ENCODE measurements at regions of chr3 and their contacts with region 1.

Region 1: DNA sequence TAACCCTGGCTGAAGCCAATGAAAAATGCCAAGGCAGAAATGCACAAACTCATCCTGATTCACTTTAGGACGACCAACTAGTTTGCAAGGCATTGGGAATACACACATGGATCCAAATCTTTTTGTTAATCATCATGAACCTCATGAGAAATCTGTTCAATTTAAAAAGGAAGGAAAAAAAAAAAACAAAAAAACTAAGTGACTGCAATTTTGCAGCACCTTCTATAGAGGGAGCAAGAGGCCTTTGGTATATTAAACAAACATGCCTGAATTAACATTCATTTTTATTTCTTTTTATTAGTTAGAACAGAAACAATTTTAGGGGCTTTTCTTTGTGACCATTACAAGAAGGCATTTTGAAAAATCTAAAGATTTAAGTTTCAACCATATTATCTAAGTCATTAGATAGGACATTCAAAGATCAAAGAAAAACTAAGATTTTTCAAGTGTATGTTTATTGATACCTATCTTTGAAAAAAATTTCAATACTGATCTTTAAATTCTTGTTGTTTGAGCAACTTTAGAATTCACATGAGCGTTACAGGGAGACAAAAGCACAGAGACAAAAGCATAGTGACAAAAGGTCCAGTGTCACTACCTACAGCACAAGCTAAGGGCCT is 182.4 kb downstream of the CBLB start:
- DNase-seq: no peak
- H3K4me3 ChIP-seq: no peak overlapping the region
- H3K27ac ChIP-seq: no peak overlapping the region
- H3K4me1 ChIP-seq: no peaks in the 10 kb centered on the region
- H3K27me3 ChIP-seq: no peaks in the 10 kb centered on the region
- CTCF ChIP-seq: peak; percentile 55 to 82 (median 69)
- EP300 ChIP-seq: no peak
- POLR2A ChIP-seq: no peak

Region 2: DNA sequence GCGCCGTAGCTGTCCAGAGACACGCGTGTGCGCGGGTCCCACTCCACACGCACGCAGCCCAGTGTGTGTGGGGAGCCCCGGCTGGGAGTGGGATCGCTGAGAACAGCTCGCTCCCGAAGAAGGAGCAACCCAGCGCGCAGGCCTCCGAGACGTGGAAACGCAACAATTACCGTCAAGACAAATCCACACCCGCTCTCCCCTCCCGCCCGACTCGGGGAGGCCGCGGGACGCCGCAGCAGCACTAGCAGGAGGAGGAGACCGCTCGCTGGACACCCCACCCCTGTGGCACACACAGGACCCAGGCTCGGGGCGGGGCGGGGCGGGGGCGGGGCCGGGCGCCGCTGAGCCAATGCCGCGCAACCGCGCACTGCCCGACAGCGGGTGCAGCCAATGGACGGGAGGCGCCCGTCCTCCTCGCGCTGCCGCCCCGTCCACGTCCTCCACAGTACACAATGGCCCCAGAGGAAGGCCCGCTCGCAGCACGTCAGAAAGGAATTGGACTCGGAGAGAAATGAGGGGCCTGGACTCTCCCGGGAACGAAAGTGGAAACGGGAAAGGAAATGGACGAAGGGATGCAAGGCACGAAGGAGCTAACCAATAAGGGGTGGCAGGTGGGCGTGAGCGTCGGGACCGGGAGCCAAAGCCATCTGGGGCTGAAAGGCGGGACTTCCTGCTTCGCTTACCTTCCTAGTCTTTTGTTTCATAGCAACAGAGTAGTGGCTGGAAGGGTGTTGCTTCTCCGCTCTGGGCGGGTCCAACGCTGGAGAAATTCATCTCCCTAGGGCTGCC is 182.5 kb after region 1 on chr3 and contains the start of gene CBLB:
- in situ Hi-C with region 1: loop called in 1 of 4 experiments (anchors 25 kb)
- intact Hi-C with region 1: no loop called
- DNase-seq: peak; percentile 92
- H3K4me3 ChIP-seq: peak within 1 kb of the TSS; percentile 75 to 92 (median 88)
- H3K27ac ChIP-seq: peak within 1 kb of the TSS; percentile 95 to 98 (median 96)
- H3K4me1 ChIP-seq: peaks cover 0 to 50% (median 27%) of the 10 kb centered on the region in 4 donors
- H3K27me3 ChIP-seq: no peaks in the 10 kb centered on the region
- CTCF ChIP-seq: no peak
- EP300 ChIP-seq: no peak
- POLR2A ChIP-seq: peak; percentile 89
- total RNA-seq, gene CBLB: 25.1 to 76.2 (median 63.6) TPM

Region 3: DNA sequence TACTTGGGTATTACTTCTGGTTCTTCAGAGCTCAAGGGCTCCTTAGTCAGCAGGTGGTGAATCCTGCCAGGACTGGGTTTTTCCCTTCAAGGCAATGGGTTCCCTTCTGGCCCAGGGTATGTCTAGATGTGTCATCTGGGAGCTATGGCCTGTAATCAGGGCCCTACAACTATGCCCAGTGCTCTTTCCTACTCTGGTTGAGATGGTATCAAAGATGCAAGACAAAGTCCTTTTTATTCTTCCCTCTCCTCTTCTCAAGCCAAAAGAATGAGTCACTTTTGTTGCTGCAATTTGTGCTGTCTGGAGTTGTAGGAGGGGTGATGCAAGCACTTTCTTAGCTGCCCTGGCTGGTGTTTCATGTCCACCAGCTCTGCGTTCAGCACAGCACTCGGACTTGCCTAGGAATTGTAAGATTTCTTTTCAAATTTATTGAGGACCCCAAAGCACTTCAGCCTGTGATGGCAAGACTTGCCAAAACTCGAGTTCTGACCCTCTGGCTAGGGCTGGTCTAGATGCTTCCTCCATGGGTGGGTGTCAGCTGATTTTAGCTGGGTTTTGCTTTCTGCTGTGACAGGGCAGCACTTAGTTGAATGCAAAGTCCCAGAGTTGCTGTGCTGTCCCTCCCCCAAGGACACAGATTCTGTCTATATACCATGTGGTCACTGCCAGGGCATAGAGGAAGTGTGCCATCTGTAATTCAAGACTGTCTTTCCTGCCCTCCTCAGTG is 311.6 kb after region 1 on chr3:
- in situ Hi-C with region 1: no loop called
- intact Hi-C with region 1: no loop called
- DNase-seq: no peak
- H3K4me3 ChIP-seq: no peak overlapping the region
- H3K27ac ChIP-seq: no peak overlapping the region
- H3K4me1 ChIP-seq: no peaks in the 10 kb centered on the region
- H3K27me3 ChIP-seq: no peaks in the 10 kb centered on the region
- CTCF ChIP-seq: no peak
- EP300 ChIP-seq: no peak
- POLR2A ChIP-seq: no peak

Region 4: GRCh38 chr3:106609666-106610301 is 923.4 kb after region 1 on chr3:
- in situ Hi-C with region 1: loop called (anchors 25 kb)
- intact Hi-C with region 1: no loop called
- DNase-seq: peak; percentile 43
- H3K4me3 ChIP-seq: no peak overlapping the region
- H3K27ac ChIP-seq: no peak overlapping the region
- H3K4me1 ChIP-seq: no peaks in the 10 kb centered on the region
- H3K27me3 ChIP-seq: no peaks in the 10 kb centered on the region
- CTCF ChIP-seq: peak; percentile 69 to 82 (median 78)
- EP300 ChIP-seq: no peak
- POLR2A ChIP-seq: no peak